Gastrocnemius medialis (tissue), 4 donors: ENCODE measurements at regions of chr14 and their contacts with region 1.

Region 1: GRCh38 chr14:105314287-105315200 is at the start of gene PACS2:
- DNase-seq: peak; percentile 46 to 65
- ATAC-seq: peak; percentile 80
- H3K4me3 ChIP-seq: peak within 1 kb of the TSS; percentile 68 to 81 (median 75)
- H3K27ac ChIP-seq: peak within 1 kb of the TSS; percentile 83 to 97 (median 90)
- H3K4me1 ChIP-seq: peaks cover 34 to 35% of the 10 kb centered on the region in 2 donors
- H3K27me3 ChIP-seq: no peaks in the 10 kb centered on the region
- CTCF ChIP-seq: no peak
- POLR2A ChIP-seq: peak; percentile 46 to 57
- total RNA-seq, gene PACS2: 81.0 to 115 (median 93.1) TPM

Region 2: GRCh38 chr14:105300792-105301533 is 13.6 kb before region 1 on chr14 and contains the start of gene BRF1:
- in situ Hi-C with region 1: no loop called
- intact Hi-C with region 1: loop called (anchors 1 kb)
- DNase-seq: peak; percentile 96 to 97
- ATAC-seq: peak; percentile 91 to 94
- H3K4me3 ChIP-seq: peak within 1 kb of the TSS; percentile 69 to 97 (median 75)
- H3K27ac ChIP-seq: peak within 1 kb of the TSS; percentile 90 to 99 (median 94)
- H3K4me1 ChIP-seq: peaks cover 12 to 14% of the 10 kb centered on the region in 2 donors
- H3K27me3 ChIP-seq: no peaks in the 10 kb centered on the region
- CTCF ChIP-seq: no peak
- POLR2A ChIP-seq: peak; percentile 73 to 76
- total RNA-seq, gene BRF1: 19.5 to 27.4 (median 21.4) TPM

Region 3: DNA sequence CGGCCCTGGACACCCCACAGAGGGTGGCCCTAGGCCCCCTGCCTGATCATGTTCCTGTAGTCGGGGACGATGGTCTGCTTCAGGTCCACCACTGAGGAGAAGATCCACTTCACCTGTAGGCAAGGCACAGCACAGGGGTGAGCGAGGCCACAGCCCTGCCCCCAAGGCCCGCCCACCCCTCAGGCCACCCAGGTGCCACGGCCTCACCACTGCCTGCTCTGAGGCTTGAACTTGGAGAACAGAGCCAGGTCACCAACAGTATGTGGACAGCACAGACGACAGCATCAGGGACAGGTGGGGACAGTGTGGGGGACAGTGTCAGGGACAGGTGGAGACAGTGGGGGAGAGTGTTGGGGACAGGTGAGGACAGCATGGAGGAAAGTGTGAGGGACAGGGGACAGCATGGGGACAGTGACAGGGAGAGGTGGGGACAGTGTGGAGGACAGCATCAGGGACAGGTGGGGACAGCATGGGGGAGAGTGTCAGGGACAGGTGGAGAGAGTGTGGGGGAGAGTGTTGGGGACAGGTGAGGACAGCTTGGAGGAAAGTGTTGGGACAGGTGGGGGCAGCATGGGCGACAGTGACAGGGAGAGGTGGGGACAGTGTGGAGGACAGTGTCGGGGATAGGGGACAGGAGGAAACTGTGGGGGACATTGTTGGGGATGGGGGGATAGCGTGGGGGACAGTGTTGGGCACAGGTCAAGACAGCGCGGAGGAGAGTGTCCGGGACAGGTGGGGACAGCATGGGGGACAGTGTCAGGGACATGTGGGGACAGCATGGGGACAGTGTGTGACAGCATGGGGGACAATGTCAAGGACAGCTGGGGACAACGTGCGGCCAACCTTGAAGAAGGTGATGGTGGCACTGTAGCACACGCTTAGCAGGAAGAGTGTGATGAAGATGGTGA is 326.6 kb after region 1 on chr14:
- in situ Hi-C with region 1: no loop called
- intact Hi-C with region 1: no loop called
- DNase-seq: no peak
- ATAC-seq: no peak
- H3K4me3 ChIP-seq: no peak overlapping the region
- H3K27ac ChIP-seq: no peak overlapping the region
- H3K4me1 ChIP-seq: no peaks in the 10 kb centered on the region
- H3K27me3 ChIP-seq: no peaks in the 10 kb centered on the region
- CTCF ChIP-seq: no peak
- POLR2A ChIP-seq: no peak